ENCODE measurements at regions of chr6 and their contacts with region 1.

Region 1: DNA sequence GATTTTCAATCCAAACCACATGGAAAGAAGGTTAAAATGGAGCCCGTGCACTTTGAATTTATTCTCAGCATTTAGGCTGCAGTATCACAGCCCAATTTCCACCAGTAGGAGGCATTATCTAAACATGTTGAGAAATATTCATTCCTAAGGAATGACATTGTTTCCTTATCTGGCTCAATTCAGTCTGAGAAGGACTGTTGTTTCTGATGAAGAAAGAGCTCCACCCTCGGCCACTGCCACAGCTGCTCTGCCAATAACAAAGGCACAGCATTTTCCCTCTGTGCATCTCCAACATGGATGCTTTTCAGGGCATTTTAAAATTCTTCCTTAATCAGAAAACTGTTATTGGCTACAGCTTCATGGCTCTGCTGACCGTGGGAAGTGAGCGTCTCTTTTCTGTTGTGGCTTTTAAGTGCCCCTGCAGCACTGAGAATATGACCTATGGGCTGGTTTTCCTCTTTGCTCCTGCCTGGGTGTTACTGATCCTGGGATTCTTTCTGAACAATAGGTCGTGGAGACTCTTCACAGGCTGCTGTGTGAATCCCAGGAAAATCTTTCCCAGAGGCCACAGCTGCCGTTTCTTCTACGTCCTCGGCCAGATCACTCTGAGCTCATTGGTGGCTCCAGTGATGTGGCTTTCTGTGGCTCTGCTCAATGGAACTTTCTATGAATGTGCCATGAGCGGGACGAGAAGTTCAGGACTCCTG is at the start of gene CALHM5:
- DNase-seq: peak; percentile 94
- ATAC-seq: peak; percentile 86
- H3K4me3 ChIP-seq: peak within 1 kb of the TSS; percentile 51
- H3K27ac ChIP-seq: peak within 1 kb of the TSS; percentile 92
- H3K4me1 ChIP-seq: peaks cover 5% of the 10 kb centered on the region
- H3K27me3 ChIP-seq: no peaks in the 10 kb centered on the region
- CTCF ChIP-seq: peak; percentile 85
- POLR2A ChIP-seq: no peak; the same call in 1 of the 2 replicates
- RAD21 ChIP-seq: peak; percentile 50
- total RNA-seq, gene CALHM5: 10.6 and 10.8 TPM in 2 replicates

Region 2: GRCh38 chr6:116387374-116387773 is 124.2 kb before region 1 on chr6:
- CTCF ChIA-PET with region 1: no interaction called
- POLR2A ChIA-PET with region 1: no interaction called
- dilution Hi-C with region 1: no loop called
- in situ Hi-C with region 1: no loop called
- intact Hi-C with region 1: loop called (anchors 5 kb)
- DNase-seq: peak; percentile 90
- ATAC-seq: no peak
- H3K4me3 ChIP-seq: no peak overlapping the region
- H3K27ac ChIP-seq: peak overlapping the region; percentile 36
- H3K4me1 ChIP-seq: peaks cover 20% of the 10 kb centered on the region
- H3K27me3 ChIP-seq: no peaks in the 10 kb centered on the region
- CTCF ChIP-seq: no peak
- POLR2A ChIP-seq: no peak
- RAD21 ChIP-seq: no peak

Region 3: GRCh38 chr6:116522879-116523278 is 11.3 kb after region 1 on chr6:
- CTCF ChIA-PET with region 1: interaction called, 10 read pairs
- POLR2A ChIA-PET with region 1: interaction called, 4 read pairs
- dilution Hi-C with region 1: no loop called
- in situ Hi-C with region 1: no loop called
- intact Hi-C with region 1: no loop called
- DNase-seq: no peak
- ATAC-seq: no peak
- H3K4me3 ChIP-seq: no peak overlapping the region
- H3K27ac ChIP-seq: no peak overlapping the region
- H3K4me1 ChIP-seq: no peaks in the 10 kb centered on the region
- H3K27me3 ChIP-seq: no peaks in the 10 kb centered on the region
- CTCF ChIP-seq: no peak
- POLR2A ChIP-seq: no peak
- RAD21 ChIP-seq: no peak

Measured in IMR-90 (cell line).